Sigmoid colon (tissue), 7 donors: ENCODE measurements at regions of chr12 and their contacts with region 1.

Region 1: GRCh38 chr12:104671407-104672098 is 214.8 kb downstream of the CHST11 start:
- DNase-seq: peak; percentile 92
- H3K4me3 ChIP-seq: no peak overlapping the region
- H3K27ac ChIP-seq: peak overlapping the region; percentile 39 to 82 (median 78)
- H3K4me1 ChIP-seq: peaks cover 0 to 82% (median 78%) of the 10 kb centered on the region in 4 donors
- H3K27me3 ChIP-seq: no peaks in the 10 kb centered on the region
- CTCF ChIP-seq: no peak
- EP300 ChIP-seq: no peak
- POLR2A ChIP-seq: no peak

Region 2: DNA sequence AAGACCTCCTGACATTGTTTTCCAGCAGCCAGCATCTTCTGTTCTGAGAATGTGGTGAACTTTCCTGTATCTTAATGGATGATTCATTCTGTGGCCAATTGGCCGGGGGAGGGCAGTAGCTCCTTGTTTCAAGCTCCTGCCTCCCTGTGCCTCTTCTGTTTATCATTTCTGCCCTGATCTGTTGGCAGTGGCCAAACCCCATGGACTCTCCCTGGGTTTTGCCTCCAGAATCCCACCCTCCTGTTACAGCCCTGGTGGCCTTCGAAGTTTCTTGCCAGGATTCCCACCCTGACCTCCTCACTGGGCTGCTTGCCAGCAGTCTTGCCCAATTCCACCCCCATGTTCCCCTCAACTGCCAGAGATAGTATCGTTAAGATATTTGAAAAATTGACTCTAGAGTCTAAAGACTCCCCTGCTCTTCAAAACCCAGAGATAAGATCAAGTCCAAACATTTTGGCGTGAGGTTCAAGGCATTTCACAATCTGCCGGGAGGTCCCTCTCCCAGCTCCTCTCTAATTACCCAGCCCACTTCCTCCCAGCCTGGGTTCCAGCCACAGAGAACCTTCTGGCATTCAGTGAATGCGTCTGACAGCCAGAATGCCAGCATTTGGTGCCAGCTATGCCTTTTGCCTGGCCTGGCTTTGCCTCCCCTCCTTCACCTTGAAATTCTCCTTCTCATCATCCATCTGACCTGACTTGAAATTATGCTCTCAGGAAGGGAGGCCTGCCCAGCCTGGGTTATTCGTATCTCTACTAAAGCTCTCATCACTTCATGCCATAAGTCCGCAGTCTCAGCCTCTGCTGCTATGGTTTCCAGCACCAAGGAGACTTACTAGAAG is 493.7 kb before region 1 on chr12:
- intact Hi-C with region 1: loop called (anchors 10 kb)
- DNase-seq: peak; percentile 97
- H3K4me3 ChIP-seq: no peak overlapping the region
- H3K27ac ChIP-seq: peak overlapping the region; percentile 83 to 91 (median 89)
- H3K4me1 ChIP-seq: peaks cover 0 to 70% (median 67%) of the 10 kb centered on the region in 4 donors
- H3K27me3 ChIP-seq: no peaks in the 10 kb centered on the region
- CTCF ChIP-seq: peak in 1 of 4 experiments; percentile 23
- EP300 ChIP-seq: peak in 2 of 4 donors; percentile 97 to 99
- POLR2A ChIP-seq: no peak

Region 3: GRCh38 chr12:104381731-104382480 is 289.6 kb before region 1 on chr12:
- intact Hi-C with region 1: loop called (anchors 10 kb)
- DNase-seq: peak; percentile 87
- H3K4me3 ChIP-seq: no peak overlapping the region
- H3K27ac ChIP-seq: no peak overlapping the region
- H3K4me1 ChIP-seq: peaks cover 0 to 12% (median 4%) of the 10 kb centered on the region in 4 donors
- H3K27me3 ChIP-seq: no peaks in the 10 kb centered on the region
- CTCF ChIP-seq: peak; percentile 83 to 95 (median 94)
- EP300 ChIP-seq: no peak
- POLR2A ChIP-seq: no peak

Region 4: GRCh38 chr12:104604070-104604994 is 67.2 kb before region 1 on chr12:
- intact Hi-C with region 1: loop called (anchors 5 kb)
- DNase-seq: peak; percentile 92
- H3K4me3 ChIP-seq: no peak overlapping the region
- H3K27ac ChIP-seq: peak overlapping the region; percentile 58 to 69 (median 66)
- H3K4me1 ChIP-seq: peaks cover 2 to 20% (median 12%) of the 10 kb centered on the region in 4 donors
- H3K27me3 ChIP-seq: no peaks in the 10 kb centered on the region
- CTCF ChIP-seq: no peak
- EP300 ChIP-seq: no peak
- POLR2A ChIP-seq: no peak

Region 5: GRCh38 chr12:104615048-104615561 is 56.4 kb before region 1 on chr12:
- intact Hi-C with region 1: loop called (anchors 2 kb)
- DNase-seq: peak; percentile 91
- H3K4me3 ChIP-seq: no peak overlapping the region
- H3K27ac ChIP-seq: peak overlapping the region; percentile 8 to 76 (median 68)
- H3K4me1 ChIP-seq: peaks cover 0 to 42% (median 21%) of the 10 kb centered on the region in 4 donors
- H3K27me3 ChIP-seq: no peaks in the 10 kb centered on the region
- CTCF ChIP-seq: no peak
- EP300 ChIP-seq: peak in 1 of 4 donors; percentile 56
- POLR2A ChIP-seq: no peak

Region 6: GRCh38 chr12:104720339-104721038 is 48.9 kb after region 1 on chr12:
- intact Hi-C with region 1: loop called (anchors 5 kb)
- DNase-seq: no peak
- H3K4me3 ChIP-seq: peak overlapping the region in 3 of 4 donors; percentile 14 to 33 (median 23)
- H3K27ac ChIP-seq: peak overlapping the region in 3 of 4 donors; percentile 24 to 54 (median 50)
- H3K4me1 ChIP-seq: peaks cover 0 to 46% (median 36%) of the 10 kb centered on the region in 4 donors
- H3K27me3 ChIP-seq: no peaks in the 10 kb centered on the region
- CTCF ChIP-seq: no peak
- EP300 ChIP-seq: no peak
- POLR2A ChIP-seq: no peak

Region 7: GRCh38 chr12:104733717-104734175 is 62.2 kb after region 1 on chr12:
- intact Hi-C with region 1: no loop called
- DNase-seq: no peak
- H3K4me3 ChIP-seq: no peak overlapping the region
- H3K27ac ChIP-seq: no peak overlapping the region
- H3K4me1 ChIP-seq: peaks cover 0 to 12% (median 0%) of the 10 kb centered on the region in 4 donors
- H3K27me3 ChIP-seq: no peaks in the 10 kb centered on the region
- CTCF ChIP-seq: no peak
- EP300 ChIP-seq: no peak
- POLR2A ChIP-seq: no peak